GM10248 (cell line): ENCODE measurements at regions of chr2 and their contacts with region 1.

Region 1: DNA sequence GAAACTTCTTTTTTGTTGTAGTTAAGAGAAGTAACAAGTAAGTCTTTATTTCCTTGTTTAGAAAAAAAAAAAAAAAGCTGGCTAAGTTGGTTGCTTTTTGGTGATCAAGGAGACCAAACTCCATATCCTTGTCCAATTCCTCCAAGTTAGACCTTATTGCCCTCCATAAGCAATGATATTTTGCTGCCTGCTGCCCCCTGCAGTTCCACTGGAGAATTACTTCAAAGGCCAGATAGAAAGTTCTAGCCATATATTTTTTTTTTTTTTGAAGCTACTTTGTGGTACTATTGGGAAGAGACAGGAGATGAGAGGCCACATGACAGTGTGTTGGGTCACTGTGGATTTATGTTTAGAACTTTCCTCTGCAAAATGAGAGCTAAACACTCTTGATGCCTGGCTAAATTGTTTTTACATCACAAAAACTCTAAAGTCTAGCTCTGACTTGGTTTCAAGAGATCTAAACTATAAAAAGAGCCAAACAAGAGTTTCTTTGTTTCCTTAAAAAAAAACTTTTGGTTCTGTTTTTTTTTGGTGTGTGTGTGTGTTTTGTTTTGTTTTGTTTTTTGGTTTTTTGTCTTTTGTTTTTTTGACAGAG is 80.7 kb upstream of the RASGRP3 start:
- DNase-seq: peak; percentile 35
- CTCF ChIP-seq: peak; percentile 50

Region 2: DNA sequence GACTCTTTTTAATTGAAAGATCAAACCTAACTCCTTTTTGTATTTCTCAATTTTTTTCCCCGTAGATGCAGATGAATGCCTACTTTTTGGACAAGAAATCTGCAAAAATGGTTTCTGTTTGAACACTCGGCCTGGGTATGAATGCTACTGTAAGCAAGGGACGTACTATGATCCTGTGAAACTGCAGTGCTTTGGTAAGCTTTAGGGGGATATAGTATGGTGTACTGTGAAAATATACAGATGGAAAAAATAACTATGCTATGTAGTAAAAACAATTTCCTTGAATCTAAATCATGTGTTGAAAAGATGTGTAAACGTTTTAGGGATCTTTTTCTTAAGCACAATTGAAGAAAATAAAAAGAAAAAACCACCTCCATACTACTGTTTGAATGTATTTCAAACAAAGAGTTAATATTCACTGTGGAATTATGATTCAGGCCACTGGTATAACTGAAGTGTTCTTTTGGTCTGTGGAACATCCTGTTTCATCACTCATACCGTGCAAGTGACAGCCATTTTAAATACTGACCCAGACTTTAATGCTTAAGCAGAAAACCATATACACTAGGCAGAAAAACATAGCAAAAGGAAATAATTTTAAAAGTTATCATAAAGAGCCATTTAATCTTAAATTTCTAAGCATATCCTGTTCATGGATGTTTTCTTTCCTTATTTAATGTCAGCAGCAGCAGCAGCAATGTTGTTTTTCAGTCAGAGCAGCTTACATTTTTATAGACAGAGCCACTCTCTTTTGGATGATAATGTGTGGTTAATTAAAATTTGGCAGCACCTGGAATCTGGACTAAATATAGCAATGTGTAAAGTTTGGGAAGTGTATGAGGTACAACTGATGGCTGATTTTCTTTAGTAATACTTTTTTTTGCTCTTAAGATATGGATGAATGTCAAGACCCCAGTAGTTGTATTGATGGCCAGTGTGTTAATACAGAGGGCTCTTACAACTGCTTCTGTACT is 32.1 kb before region 1 on chr2:
- CTCF ChIA-PET with region 1: no interaction called
- POLR2A ChIA-PET with region 1: no interaction called
- DNase-seq: no peak
- CTCF ChIP-seq: no peak

Region 3: DNA sequence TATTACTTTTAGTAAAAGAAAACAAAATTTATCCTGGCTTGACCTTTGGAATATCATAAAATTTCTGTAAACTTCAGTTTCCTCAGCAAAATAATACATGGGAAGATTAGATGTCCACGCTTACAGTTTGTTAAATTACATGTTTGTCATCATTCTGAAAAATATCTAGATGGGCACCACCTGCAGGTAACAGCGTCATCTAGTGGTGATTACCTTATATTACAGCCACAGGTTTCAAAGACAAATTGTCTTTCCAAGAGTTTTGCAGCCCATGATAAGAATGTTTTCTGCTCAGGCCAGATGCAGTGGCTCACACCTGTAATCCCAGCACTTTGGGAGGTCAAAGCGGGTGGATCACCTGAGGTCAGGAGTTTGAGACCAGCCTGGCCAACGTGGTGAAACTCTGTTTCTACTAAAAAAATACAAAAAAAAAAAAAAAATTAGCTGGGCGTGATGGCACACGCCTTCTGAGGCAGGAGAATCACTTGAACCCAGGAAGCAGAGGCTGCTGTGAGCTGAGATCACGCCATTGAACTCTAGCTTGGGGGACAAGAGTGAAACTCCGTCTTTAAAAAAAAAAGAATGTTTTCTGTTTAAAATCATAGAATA is 15.6 kb before region 1 on chr2:
- CTCF ChIA-PET with region 1: interaction called, 14 read pairs
- POLR2A ChIA-PET with region 1: no interaction called
- DNase-seq: no peak
- CTCF ChIP-seq: peak; percentile 44

Region 4: GRCh38 chr2:33419581-33420200 is 23.9 kb after region 1 on chr2:
- CTCF ChIA-PET with region 1: no interaction called
- POLR2A ChIA-PET with region 1: no interaction called
- DNase-seq: no peak
- CTCF ChIP-seq: no peak

Region 5: GRCh38 chr2:33535421-33535820 is 139.7 kb after region 1 on chr2:
- CTCF ChIA-PET with region 1: no interaction called
- POLR2A ChIA-PET with region 1: no interaction called
- DNase-seq: no peak
- CTCF ChIP-seq: no peak